ENCODE measurements at regions of chr6 and their contacts with region 1.

Region 1: DNA sequence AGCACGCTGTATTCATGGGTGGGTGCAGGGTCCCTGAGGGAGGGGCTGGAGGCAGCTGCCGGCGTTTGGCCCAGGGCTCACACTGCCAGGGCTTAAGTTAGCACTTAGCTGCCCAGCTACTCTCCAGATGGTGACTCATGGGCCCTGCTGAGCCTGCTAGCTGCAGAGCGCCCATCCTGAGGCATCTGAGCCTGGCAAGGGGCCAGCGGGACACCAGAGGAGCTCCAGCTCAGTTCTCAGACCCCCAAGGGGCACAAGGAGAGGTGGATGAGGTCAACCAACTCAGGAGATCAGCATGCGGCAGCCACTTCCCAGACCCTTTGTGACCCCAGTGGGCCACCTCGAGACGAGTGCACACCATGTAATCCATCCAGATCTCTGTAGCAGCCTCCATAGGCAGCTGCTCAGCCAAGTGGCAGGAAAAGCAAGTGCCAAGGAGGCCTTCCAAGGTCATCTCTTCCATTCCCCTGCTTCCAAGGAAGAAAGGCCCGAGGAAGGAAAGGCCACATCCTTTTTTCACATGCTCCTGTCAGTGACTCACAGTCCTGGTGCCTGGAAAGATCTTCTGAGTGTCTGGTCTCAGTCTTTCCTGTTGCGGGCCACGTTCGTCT is 35.3 kb downstream of the FOXP4 start:
- DNase-seq: no peak
- H3K4me3 ChIP-seq: no peak overlapping the region
- CTCF ChIP-seq: no peak
- POLR2A ChIP-seq: no peak

Region 2: GRCh38 chr6:41371461-41371991 is 210.0 kb before region 1 on chr6:
- intact Hi-C with region 1: loop called (anchors 10 kb)
- DNase-seq: no peak
- H3K4me3 ChIP-seq: no peak overlapping the region
- CTCF ChIP-seq: no peak
- POLR2A ChIP-seq: no peak

Region 3: GRCh38 chr6:41416501-41416837 is 165.0 kb before region 1 on chr6:
- intact Hi-C with region 1: loop called (anchors 5 kb)
- DNase-seq: no peak
- H3K4me3 ChIP-seq: no peak overlapping the region
- CTCF ChIP-seq: no peak
- POLR2A ChIP-seq: no peak